A549 (cell line): ENCODE measurements at regions of chr16 and their contacts with region 1.

Region 1: GRCh38 chr16:56317998-56318826 is 107.1 kb downstream of the AMFR start:
- DNase-seq: peak; percentile 66 to 92
- ATAC-seq: peak; percentile 93 to 99
- H3K4me3 ChIP-seq: no peak overlapping the region
- H3K27ac ChIP-seq: peak overlapping the region in 1 of 2 experiments; percentile 64; a peak in 2 of 6 replicates
- H3K4me1 ChIP-seq: 0 out of 3 replicates have a peak, but pooled peaks cover 3% of the 10 kb centered on the region
- CTCF ChIP-seq: peak; percentile 82
- EP300 ChIP-seq: no peak
- POLR2A ChIP-seq: no peak
- RAD21 ChIP-seq: peak; percentile 92 to 93

Region 2: DNA sequence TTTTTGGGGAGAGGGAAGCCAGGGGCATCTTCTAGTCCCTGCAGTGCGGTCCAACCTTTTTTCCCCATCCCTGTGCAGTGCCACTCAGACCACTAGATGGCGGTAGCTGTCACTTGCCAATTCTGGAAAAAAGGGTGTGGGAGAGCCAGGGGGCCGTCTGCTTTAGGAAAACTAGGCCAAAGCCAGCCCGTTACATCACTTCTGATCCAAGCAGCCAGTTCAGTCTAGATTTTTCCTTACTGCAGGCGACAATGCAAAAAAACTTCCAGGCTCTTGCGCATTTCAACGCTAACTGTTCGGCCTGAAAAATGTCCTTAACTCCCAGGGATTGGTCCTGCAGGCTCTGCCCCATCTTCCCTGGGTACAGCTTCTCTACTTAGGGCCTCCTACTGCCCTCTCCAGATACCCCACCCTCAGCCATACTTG is 373.8 kb before region 1 on chr16:
- CTCF ChIA-PET with region 1: interaction called, 101 read pairs
- POLR2A ChIA-PET with region 1: no interaction called
- DNase-seq: peak; percentile 36 to 46
- ATAC-seq: peak; percentile 82 to 95; a peak in 5 of 6 replicates
- H3K4me3 ChIP-seq: no peak overlapping the region
- H3K27ac ChIP-seq: no peak overlapping the region
- H3K4me1 ChIP-seq: no peaks in the 10 kb centered on the region
- CTCF ChIP-seq: peak; percentile 77
- EP300 ChIP-seq: no peak
- POLR2A ChIP-seq: no peak
- RAD21 ChIP-seq: peak; percentile 57 to 75

Region 3: GRCh38 chr16:56119133-56119532 is 199.1 kb before region 1 on chr16:
- CTCF ChIA-PET with region 1: no interaction called
- POLR2A ChIA-PET with region 1: no interaction called
- DNase-seq: no peak
- ATAC-seq: no peak
- H3K4me3 ChIP-seq: no peak overlapping the region
- H3K27ac ChIP-seq: no peak overlapping the region
- H3K4me1 ChIP-seq: no peaks in the 10 kb centered on the region
- CTCF ChIP-seq: no peak
- EP300 ChIP-seq: no peak
- POLR2A ChIP-seq: no peak
- RAD21 ChIP-seq: no peak

Region 4: GRCh38 chr16:56281256-56281805 is 36.9 kb before region 1 on chr16:
- CTCF ChIA-PET with region 1: interaction called, 18 read pairs
- POLR2A ChIA-PET with region 1: no interaction called
- DNase-seq: peak in 1 of 2 experiments; percentile 36
- ATAC-seq: peak in 1 of 2 experiments; percentile 80; a peak in 3 of 6 replicates
- H3K4me3 ChIP-seq: no peak overlapping the region
- H3K27ac ChIP-seq: no peak overlapping the region
- H3K4me1 ChIP-seq: no peaks in the 10 kb centered on the region
- CTCF ChIP-seq: peak; percentile 30; the same call in 2 of the 3 replicates
- EP300 ChIP-seq: no peak
- POLR2A ChIP-seq: no peak
- RAD21 ChIP-seq: peak in 1 of 2 experiments; percentile 28; a peak in 2 of 5 replicates

Region 5: DNA sequence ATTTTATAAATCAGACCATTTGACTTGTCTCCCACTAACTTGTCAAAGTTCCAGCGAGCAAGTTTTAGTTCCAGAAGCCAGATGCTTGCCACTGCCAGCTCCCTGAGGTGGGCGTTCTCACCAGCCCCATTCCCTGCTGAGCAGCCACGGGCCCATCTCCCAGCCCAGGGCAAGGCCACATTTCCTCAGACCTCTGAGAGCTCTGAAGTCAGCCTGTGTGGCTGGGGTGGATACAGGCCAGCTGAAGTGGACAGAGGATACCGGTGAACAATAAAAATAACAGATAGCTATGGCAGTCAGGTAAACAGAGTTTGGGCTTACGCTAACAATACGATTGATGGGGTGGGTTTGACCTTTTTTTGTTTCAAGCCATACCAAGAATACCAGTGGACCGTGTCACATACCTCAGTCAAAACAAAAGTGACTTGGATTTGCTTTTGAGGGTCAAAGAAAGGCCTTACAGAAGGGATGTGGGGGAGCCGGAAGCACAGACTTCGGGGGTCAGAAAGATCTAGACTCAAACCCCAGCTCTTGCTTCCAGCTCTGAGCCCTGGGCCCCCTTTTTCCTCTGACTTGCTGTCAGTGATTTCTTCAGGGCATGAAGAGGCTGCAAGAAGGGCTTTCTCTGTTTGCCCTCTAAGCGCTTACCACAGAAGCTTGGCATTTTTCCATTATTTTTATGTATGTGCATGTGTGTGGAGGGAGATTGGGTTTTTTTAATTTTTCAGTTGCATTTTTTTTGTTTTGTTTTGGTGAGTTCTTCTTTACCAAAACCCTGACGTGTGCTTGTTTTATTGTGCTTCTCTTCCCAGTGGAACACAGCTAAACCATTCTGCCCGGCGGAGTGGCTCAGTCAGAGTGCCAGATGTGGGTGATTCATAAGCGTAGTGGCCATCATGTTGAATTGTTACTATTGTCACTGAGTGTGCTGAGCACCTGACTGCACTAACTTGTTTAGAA is 17.0 kb before region 1 on chr16:
- CTCF ChIA-PET with region 1: interaction called, 56 read pairs
- POLR2A ChIA-PET with region 1: no interaction called
- DNase-seq: no peak
- ATAC-seq: peak in 1 of 2 experiments; percentile 16; a peak in 2 of 6 replicates
- H3K4me3 ChIP-seq: no peak overlapping the region
- H3K27ac ChIP-seq: no peak overlapping the region
- H3K4me1 ChIP-seq: 0 out of 3 replicates have a peak, but pooled peaks cover 4% of the 10 kb centered on the region
- CTCF ChIP-seq: no peak
- EP300 ChIP-seq: no peak
- POLR2A ChIP-seq: no peak
- RAD21 ChIP-seq: no peak

Region 6: DNA sequence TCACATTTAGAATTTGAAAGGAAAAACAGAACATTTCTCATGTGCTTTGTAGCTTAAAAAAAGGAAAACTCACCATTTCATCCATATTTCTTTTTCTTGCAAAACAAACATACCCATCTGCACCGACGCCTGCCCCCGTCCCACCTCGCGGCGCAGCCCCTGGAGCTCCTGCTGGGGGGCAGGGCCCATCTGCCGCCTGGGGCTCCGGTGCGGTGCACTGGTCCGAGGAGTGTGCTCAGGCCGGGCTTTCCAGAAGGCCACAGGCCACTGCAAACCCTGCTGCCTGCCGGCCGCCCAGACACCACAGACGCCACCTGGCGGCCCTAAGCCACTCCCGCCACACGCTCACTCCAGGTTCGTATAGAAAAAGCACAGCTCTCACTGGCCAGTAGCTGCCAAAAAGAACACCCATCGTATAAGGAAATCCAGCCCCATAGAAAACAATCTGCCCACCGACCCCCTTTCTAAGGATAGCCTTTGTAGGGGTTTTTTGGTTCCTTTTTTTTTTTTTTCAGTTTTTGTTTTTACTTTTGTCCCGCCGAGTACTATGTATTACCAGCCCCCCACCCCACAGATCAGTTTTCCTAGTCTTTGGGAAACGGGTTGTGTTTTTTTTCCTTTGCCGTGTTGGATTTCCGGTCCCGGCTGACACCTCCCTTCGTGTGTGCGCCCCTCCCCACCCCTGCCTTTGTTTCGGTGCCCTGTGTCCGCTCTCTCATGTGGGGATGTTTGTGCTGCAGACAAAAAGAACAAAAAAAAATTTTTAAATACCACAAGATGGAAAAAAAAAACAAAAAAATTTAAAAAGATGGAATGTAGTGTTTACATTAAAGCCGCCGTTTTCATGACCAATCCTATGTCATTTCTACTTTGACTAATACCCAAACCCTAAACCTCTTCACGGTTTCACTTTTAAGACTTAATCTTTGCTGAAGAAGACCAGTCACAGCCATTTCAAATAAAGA is 38.3 kb after region 1 on chr16:
- CTCF ChIA-PET with region 1: interaction called, 14 read pairs
- POLR2A ChIA-PET with region 1: no interaction called
- DNase-seq: peak; percentile 85 to 91
- ATAC-seq: peak; percentile 93 to 97
- H3K4me3 ChIP-seq: peak overlapping the region; percentile 38
- H3K27ac ChIP-seq: peak overlapping the region; percentile 70 to 81
- H3K4me1 ChIP-seq: peaks cover 12% of the 10 kb centered on the region
- CTCF ChIP-seq: peak; percentile 80
- EP300 ChIP-seq: no peak
- POLR2A ChIP-seq: no peak
- RAD21 ChIP-seq: peak; percentile 65 to 71